ENCODE measurements at regions of chr5 and their contacts with region 1.

Region 1: DNA sequence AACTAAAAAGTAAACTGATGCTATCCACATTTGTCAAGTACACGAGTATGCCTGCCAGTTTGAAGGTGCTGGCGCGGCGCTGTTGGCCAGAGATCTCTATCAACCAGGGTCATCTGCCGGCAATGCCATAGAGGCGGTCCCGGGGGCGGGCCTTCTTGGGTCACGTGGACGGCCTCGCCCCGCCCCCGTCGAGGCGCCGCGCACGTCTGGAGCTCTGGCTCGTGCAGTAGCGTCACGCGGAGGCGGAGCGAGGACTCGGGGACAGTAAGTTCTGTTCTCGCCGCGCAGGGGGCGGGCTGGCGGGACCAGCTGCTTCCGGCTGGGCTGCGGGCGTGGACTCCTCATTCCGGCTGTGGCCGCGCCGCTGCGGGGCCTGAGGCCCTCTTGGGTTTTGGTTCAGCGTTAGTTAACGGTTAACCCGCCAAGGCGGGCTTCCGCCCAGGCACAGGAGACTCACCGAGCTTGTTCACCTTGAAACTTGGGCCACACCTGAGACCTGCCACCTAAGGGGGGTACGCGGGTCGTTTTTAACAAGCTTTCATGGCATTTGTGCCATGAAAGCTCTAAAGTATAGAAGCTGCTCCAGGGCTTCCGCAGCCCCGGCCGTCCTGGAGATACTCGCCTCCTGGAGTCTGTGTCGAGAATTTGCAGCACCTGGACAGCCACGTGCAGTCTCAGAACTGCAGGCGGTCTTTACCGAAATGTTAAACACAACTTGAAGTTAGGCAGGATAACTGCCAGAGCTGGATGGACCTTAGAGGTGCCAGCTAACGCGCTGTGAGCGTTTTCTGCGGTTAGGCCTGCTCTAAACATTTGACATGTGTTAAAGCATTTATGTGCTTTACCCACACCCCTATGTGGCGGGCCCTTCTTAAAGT is at the start of gene RFESD:
- DNase-seq: peak; percentile 84 to 94 (median 90)
- ATAC-seq: peak; percentile 98
- H3K4me3 ChIP-seq: peak within 1 kb of the TSS; percentile 80
- H3K4me3 Mint-ChIP-seq: peak within 1 kb of the TSS; percentile 84 to 93 (median 88)
- H3K27ac ChIP-seq: peak within 1 kb of the TSS; percentile 80
- H3K27ac Mint-ChIP-seq: peak within 1 kb of the TSS; percentile 71 to 95 (median 89)
- H3K4me1 ChIP-seq: peaks cover 0 to 18% of the 10 kb centered on the region in 2 donors
- H3K4me1 Mint-ChIP-seq: peaks cover 7 to 53% (median 40%) of the 10 kb centered on the region in 7 donors
- H3K27me3 ChIP-seq: no peaks in the 10 kb centered on the region
- H3K27me3 Mint-ChIP-seq: no peaks in the 10 kb centered on the region
- total RNA-seq, gene RFESD: 2.2 to 9.2 (median 6.5) TPM

Region 2: GRCh38 chr5:95631991-95632675 is 14.7 kb before region 1 on chr5:
- CTCF ChIA-PET with region 1: interaction called, 10 read pairs
- POLR2A ChIA-PET with region 1: interaction called, 24 read pairs
- intact Hi-C with region 1: loop called (anchors 1 kb)
- DNase-seq: peak; percentile 27 to 86 (median 79)
- ATAC-seq: peak; percentile 98
- H3K4me3 ChIP-seq: peak overlapping the region; percentile 8
- H3K4me3 Mint-ChIP-seq: peak overlapping the region; percentile 21 to 79 (median 69)
- H3K27ac ChIP-seq: peak overlapping the region; percentile 65
- H3K27ac Mint-ChIP-seq: peak overlapping the region; percentile 90 to 99 (median 94)
- H3K4me1 ChIP-seq: peaks cover 6 to 24% of the 10 kb centered on the region in 2 donors
- H3K4me1 Mint-ChIP-seq: peaks cover 15 to 52% (median 35%) of the 10 kb centered on the region in 7 donors
- H3K27me3 ChIP-seq: no peaks in the 10 kb centered on the region
- H3K27me3 Mint-ChIP-seq: peaks cover 0 to 10% (median 0%) of the 10 kb centered on the region in 5 donors

Region 3: DNA sequence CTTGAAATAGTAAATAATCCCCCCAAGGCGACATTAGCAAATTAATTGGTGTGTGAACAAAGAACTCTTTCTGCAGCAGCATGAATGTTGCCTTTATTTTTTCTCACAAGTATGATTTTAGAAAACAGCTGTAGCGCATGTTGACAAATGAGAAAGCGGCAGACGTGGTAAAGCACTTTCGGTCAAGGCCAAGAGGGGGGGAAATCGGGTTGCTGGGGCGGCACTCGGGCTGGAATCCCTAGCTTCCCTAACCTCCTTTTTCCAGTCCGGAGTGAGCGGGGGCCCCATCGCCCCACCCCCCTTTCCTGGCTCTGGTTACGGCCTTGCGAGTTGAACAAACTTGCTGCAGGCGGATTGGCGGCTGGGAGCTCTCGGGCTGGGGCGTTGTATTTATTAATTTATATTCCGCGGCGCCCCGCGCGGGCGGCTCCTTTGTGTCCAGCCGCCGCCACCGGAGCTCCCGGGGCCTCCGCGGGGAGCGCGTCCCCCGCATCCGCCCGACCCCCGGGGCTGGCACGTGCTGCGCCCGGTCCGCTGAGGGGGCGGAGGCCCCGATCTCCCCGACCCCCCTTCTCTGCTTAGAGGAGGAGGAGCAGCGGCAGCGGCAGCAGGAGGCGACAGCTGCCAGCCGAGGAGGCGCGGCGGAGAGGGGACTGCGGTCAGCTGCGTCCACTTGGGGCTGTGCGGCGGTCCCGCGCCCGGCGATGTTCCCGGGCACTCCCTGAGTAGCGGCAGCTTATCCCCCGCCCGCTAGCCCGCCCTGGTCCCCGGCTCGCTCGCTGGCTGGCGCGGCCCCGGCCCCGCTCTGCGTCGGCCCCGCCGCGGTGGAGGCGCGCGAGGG is 84.2 kb after region 1 on chr5 and contains the start of gene RHOBTB3:
- CTCF ChIA-PET with region 1: interaction called, 3 read pairs
- POLR2A ChIA-PET with region 1: no interaction called
- intact Hi-C with region 1: loop called (anchors 5 kb)
- DNase-seq: peak; percentile 20 to 58 (median 41)
- ATAC-seq: peak; percentile 77
- H3K4me3 ChIP-seq: peak within 1 kb of the TSS; percentile 64
- H3K4me3 Mint-ChIP-seq: peak within 1 kb of the TSS; percentile 83 to 94 (median 88)
- H3K27ac ChIP-seq: peak within 1 kb of the TSS; percentile 9
- H3K27ac Mint-ChIP-seq: peak within 1 kb of the TSS in 8 of 9 donors; percentile 30 to 88 (median 62)
- H3K4me1 ChIP-seq: peaks cover 0 to 20% of the 10 kb centered on the region in 2 donors
- H3K4me1 Mint-ChIP-seq: peaks cover 32 to 88% (median 63%) of the 10 kb centered on the region in 7 donors
- H3K27me3 ChIP-seq: peaks cover 4 to 6% of the 10 kb centered on the region in 2 donors
- H3K27me3 Mint-ChIP-seq: peaks cover 6 to 79% (median 13%) of the 10 kb centered on the region in 5 donors
- total RNA-seq, gene RHOBTB3: 0.24 to 9.6 (median 1.6) TPM

Region 4: GRCh38 chr5:95808686-95809413 is 162.1 kb after region 1 on chr5:
- CTCF ChIA-PET with region 1: interaction called, 4 read pairs
- POLR2A ChIA-PET with region 1: no interaction called
- intact Hi-C with region 1: loop called in 1 of 2 experiments (anchors 1 kb)
- DNase-seq: peak; percentile 54 to 92 (median 88)
- ATAC-seq: peak; percentile 100
- H3K4me3 ChIP-seq: peak overlapping the region; percentile 24
- H3K4me3 Mint-ChIP-seq: peak overlapping the region; percentile 21 to 84 (median 76)
- H3K27ac ChIP-seq: peak overlapping the region; percentile 75
- H3K27ac Mint-ChIP-seq: peak overlapping the region; percentile 76 to 98 (median 90)
- H3K4me1 ChIP-seq: peaks cover 31 to 49% of the 10 kb centered on the region in 2 donors
- H3K4me1 Mint-ChIP-seq: peaks cover 53 to 71% (median 64%) of the 10 kb centered on the region in 7 donors
- H3K27me3 ChIP-seq: no peaks in the 10 kb centered on the region
- H3K27me3 Mint-ChIP-seq: no peaks in the 10 kb centered on the region

Region 5: GRCh38 chr5:95846554-95847260 is 199.9 kb after region 1 on chr5:
- CTCF ChIA-PET with region 1: interaction called, 5 read pairs
- POLR2A ChIA-PET with region 1: interaction called, 3 read pairs
- intact Hi-C with region 1: loop called (anchors 1 kb)
- DNase-seq: peak; percentile 38 to 73 (median 68)
- ATAC-seq: peak; percentile 88
- H3K4me3 ChIP-seq: no peak overlapping the region
- H3K4me3 Mint-ChIP-seq: no peak overlapping the region
- H3K27ac ChIP-seq: no peak overlapping the region
- H3K27ac Mint-ChIP-seq: peak overlapping the region in 2 of 9 donors; percentile 3 to 18
- H3K4me1 ChIP-seq: peaks cover 10 to 13% of the 10 kb centered on the region in 2 donors
- H3K4me1 Mint-ChIP-seq: peaks cover 10 to 33% (median 16%) of the 10 kb centered on the region in 7 donors
- H3K27me3 ChIP-seq: no peaks in the 10 kb centered on the region
- H3K27me3 Mint-ChIP-seq: peaks cover 0 to 15% (median 0%) of the 10 kb centered on the region in 5 donors

Region 6: DNA sequence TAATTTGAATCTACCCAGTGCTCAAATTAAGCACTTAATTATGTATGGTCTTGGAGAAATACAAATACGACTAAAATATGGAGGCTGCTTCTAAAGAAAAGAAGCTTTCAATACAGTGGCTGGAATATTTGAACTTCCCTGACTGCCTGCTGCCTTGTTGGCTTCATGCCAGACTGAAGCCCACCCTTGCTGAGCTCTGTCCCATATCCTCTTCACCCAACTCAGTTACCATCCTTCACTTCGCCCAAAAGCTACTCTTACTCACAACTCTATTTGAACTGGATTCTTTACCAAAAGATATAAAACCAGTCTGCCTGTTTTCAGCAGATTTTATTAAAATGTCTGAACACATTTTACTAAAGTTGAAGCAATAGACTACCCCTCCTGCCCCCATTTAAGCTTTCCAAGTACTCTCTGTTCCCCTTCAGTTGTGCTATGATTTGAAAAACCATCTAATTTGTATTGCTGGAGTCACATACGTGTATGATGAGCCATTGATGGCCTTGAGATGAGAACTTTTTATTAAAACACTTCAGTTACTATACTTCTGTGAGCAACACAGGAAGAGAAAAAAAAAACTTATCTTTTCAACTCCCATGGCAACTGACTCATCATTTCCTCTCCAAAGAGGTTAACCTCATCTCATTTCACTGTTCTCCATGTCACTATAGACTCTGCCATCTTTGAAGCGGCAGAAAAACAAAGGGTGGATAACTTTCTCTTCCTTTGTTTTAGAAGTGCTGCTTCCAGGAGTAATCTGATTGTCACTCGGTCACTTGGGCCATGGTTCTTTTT is 890.4 kb after region 1 on chr5:
- CTCF ChIA-PET with region 1: no interaction called
- POLR2A ChIA-PET with region 1: no interaction called
- intact Hi-C with region 1: loop called (anchors 5 to 10 kb)
- DNase-seq: peak in 7 of 9 donors; percentile 54 to 79 (median 73)
- ATAC-seq: peak; percentile 97
- H3K4me3 ChIP-seq: peak overlapping the region; percentile 14
- H3K4me3 Mint-ChIP-seq: peak overlapping the region in 9 of 10 donors; percentile 26 to 76 (median 61)
- H3K27ac ChIP-seq: peak overlapping the region; percentile 41
- H3K27ac Mint-ChIP-seq: peak overlapping the region; percentile 82 to 94 (median 88)
- H3K4me1 ChIP-seq: peaks cover 20 to 23% of the 10 kb centered on the region in 2 donors
- H3K4me1 Mint-ChIP-seq: peaks cover 15 to 41% (median 32%) of the 10 kb centered on the region in 7 donors
- H3K27me3 ChIP-seq: no peaks in the 10 kb centered on the region
- H3K27me3 Mint-ChIP-seq: peaks cover 0 to 6% (median 0%) of the 10 kb centered on the region in 5 donors

Measured in naive thymus-derived CD4-positive, alpha-beta T cell (primary cell).